Calu3 (cell line): ENCODE measurements at regions of chr5 and their contacts with region 1.

Region 1: DNA sequence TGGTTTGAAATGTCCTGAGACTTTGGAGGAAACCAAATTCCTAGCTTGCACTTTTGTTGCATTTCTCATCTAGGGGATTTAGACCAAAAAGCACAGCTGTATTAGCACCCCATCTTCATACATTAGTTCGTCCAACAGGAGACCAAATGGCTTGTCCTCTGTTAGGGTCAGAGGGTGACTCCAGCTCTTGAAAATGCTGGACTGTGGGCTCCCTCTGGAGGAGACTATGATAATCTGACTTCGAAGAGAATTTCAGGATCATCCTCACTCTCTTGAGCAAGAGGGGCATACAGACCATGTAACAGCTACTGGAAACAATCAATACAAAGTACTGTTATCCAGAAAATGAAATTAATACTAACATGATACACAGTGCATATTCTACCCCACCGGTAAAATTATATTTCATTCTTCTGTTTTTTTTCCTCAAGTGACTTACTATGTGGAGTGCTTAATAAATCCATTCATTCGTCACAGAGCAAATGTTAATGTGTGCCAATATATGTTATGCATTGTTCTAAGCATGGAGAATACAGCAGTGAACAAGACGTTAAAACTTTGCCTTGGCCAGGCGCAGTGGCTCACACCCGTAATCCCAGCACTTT is 63.7 kb upstream of the PPP2CA start:
- DNase-seq: peak; percentile 79
- H3K4me3 Mint-ChIP-seq: no peak overlapping the region
- H3K27ac Mint-ChIP-seq: no peak overlapping the region
- H3K4me1 Mint-ChIP-seq: peaks cover under 1% of the 10 kb centered on the region
- H3K27me3 Mint-ChIP-seq: no peaks in the 10 kb centered on the region
- CTCF ChIP-seq: peak; percentile 80

Region 2: GRCh38 chr5:132820162-132820754 is 1469.4 kb before region 1 on chr5:
- CTCF ChIA-PET with region 1: no interaction called
- intact Hi-C with region 1: no loop called
- DNase-seq: peak; percentile 94
- H3K4me3 Mint-ChIP-seq: no peak overlapping the region
- H3K27ac Mint-ChIP-seq: no peak overlapping the region
- H3K4me1 Mint-ChIP-seq: peaks cover 9% of the 10 kb centered on the region
- H3K27me3 Mint-ChIP-seq: no peaks in the 10 kb centered on the region
- CTCF ChIP-seq: peak; percentile 91

Region 3: DNA sequence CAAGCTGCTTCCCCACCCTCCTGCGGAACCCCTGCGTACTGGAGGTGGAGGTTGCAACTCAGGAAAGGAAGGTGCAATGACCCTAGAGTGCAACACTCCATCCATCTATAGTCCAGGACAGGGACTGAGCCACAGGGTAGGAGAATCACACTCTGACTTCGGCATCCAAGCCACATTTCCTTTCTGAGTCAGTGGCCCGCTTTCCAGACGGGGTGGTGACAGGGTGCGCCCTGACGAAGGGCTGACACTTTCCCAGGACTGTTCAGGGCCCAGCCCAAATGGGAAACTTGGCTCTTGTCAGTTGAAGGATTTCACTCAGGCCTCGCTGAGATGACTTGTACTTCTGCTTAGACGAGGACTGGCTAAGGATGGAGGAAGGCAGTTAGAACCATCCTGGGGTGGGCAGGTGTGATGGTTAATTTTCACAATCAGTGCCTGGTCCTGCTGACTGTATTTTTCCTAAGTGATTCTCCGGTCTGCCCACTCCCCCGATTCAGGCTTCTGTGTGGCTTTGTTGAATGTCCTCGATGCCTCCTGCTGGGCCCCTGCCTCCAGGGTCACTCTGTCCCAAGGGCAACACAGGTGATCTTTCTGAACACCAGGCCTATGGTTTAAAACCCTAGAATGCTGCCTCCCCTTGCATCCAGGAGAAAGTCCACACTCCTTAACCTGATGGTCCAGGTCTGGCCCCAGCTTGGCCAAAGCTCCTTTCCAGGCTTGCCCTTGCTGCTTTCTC is 905.3 kb before region 1 on chr5:
- CTCF ChIA-PET with region 1: no interaction called
- intact Hi-C with region 1: no loop called
- DNase-seq: no peak
- H3K4me3 Mint-ChIP-seq: no peak overlapping the region
- H3K27ac Mint-ChIP-seq: no peak overlapping the region
- H3K4me1 Mint-ChIP-seq: no peaks in the 10 kb centered on the region
- H3K27me3 Mint-ChIP-seq: peaks cover 99% of the 10 kb centered on the region
- CTCF ChIP-seq: no peak

Region 4: GRCh38 chr5:134026521-134027268 is 262.9 kb before region 1 on chr5:
- CTCF ChIA-PET with region 1: no interaction called
- intact Hi-C with region 1: loop called (anchors 10 kb)
- DNase-seq: peak; percentile 82
- H3K4me3 Mint-ChIP-seq: no peak overlapping the region
- H3K27ac Mint-ChIP-seq: no peak overlapping the region
- H3K4me1 Mint-ChIP-seq: peaks cover 28% of the 10 kb centered on the region
- H3K27me3 Mint-ChIP-seq: no peaks in the 10 kb centered on the region
- CTCF ChIP-seq: peak; percentile 59

Region 5: DNA sequence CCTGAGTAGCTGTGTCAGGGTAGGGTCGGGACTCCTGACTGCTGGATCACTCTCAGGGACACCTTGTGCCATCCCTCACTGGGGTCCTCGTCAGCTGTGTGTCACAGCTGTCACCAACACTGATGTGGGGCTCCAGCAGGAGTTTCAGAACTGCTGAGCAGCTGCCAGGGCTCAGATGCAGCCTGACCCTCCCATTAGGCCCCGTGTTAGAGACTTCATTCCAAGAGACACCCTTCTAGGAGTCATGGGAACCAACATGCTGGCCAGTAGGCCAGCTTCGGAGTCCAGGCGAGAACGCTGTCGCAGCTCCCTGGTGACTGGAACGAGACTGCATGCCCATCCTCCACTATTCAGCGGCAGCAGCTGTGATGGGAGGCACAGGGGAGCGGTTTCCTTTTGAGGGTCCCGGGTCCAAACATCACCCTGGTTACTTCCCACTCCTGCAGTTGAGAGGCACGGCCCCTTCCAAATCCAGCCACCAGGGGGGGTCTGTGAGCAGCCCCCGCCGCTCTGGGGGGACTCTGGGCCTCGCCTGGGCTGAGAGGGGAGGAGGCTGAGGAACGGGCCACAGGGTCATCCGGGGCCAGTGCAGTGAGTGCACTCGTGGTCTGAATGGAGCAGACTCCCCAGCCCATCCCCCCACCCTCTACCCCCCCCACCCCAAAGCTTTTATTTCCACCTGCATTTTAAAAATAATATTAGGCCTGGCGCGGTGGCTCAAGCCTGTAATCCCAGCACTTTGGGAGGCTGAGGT is 187.7 kb before region 1 on chr5:
- CTCF ChIA-PET with region 1: interaction called, 3 read pairs
- intact Hi-C with region 1: loop called (anchors 5 kb)
- DNase-seq: peak; percentile 79
- H3K4me3 Mint-ChIP-seq: no peak overlapping the region
- H3K27ac Mint-ChIP-seq: no peak overlapping the region
- H3K4me1 Mint-ChIP-seq: peaks cover 28% of the 10 kb centered on the region
- H3K27me3 Mint-ChIP-seq: no peaks in the 10 kb centered on the region
- CTCF ChIP-seq: peak; percentile 93

Region 6: GRCh38 chr5:134184155-134185135 is 105.2 kb before region 1 on chr5:
- CTCF ChIA-PET with region 1: interaction called, 21 read pairs
- intact Hi-C with region 1: loop called (anchors 1 kb)
- DNase-seq: peak; percentile 87
- H3K4me3 Mint-ChIP-seq: no peak overlapping the region
- H3K27ac Mint-ChIP-seq: no peak overlapping the region
- H3K4me1 Mint-ChIP-seq: peaks cover 22% of the 10 kb centered on the region
- H3K27me3 Mint-ChIP-seq: no peaks in the 10 kb centered on the region
- CTCF ChIP-seq: peak; percentile 95

Region 7: GRCh38 chr5:134225618-134226440 is 63.8 kb before region 1 on chr5 and contains the start of gene PPP2CA:
- CTCF ChIA-PET with region 1: interaction called, 22 read pairs
- intact Hi-C with region 1: loop called (anchors 2 kb)
- DNase-seq: peak; percentile 99
- H3K4me3 Mint-ChIP-seq: peak within 1 kb of the TSS; percentile 93
- H3K27ac Mint-ChIP-seq: peak within 1 kb of the TSS; percentile 94
- H3K4me1 Mint-ChIP-seq: peaks cover 37% of the 10 kb centered on the region
- H3K27me3 Mint-ChIP-seq: no peaks in the 10 kb centered on the region
- CTCF ChIP-seq: peak; percentile 21
- total RNA-seq, gene PPP2CA: 242 and 260 TPM in 2 replicates

Region 8: GRCh38 chr5:134245101-134245604 is 44.5 kb before region 1 on chr5:
- CTCF ChIA-PET with region 1: interaction called, 3 read pairs
- intact Hi-C with region 1: loop called (anchors 5 kb)
- DNase-seq: peak; percentile 72
- H3K4me3 Mint-ChIP-seq: peak overlapping the region; percentile 43
- H3K27ac Mint-ChIP-seq: peak overlapping the region; percentile 77
- H3K4me1 Mint-ChIP-seq: peaks cover 54% of the 10 kb centered on the region
- H3K27me3 Mint-ChIP-seq: no peaks in the 10 kb centered on the region
- CTCF ChIP-seq: no peak